ENCODE measurements at regions of chr9 and their contacts with region 1.

Region 1: DNA sequence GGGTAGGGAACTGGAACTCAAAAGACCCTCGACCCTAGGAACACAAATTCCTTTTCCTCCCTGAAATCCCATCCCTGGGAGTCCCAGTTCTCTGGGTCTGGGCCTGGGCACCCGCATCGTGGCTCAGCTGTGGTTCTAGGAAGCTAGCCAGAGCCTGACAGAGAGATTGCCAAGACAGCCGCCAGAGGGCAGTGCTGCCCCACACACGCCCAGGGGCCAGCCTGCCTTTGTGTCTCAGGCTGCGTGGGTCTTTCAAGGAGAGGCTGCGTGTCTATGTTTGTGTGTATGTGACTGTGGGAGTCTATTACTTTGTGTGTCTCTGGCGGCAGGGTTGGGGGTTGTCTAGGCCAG is 32.0 kb upstream of the TTLL11 start:
- DNase-seq: peak; percentile 46 to 80
- H3K4me3 ChIP-seq: no peak overlapping the region
- H3K27ac ChIP-seq: no peak overlapping the region
- H3K4me1 ChIP-seq: no peaks in the 10 kb centered on the region
- H3K27me3 ChIP-seq: no peaks in the 10 kb centered on the region
- CTCF ChIP-seq: peak; percentile 95

Region 2: GRCh38 chr9:121529237-121529987 is 595.7 kb before region 1 on chr9:
- CTCF ChIA-PET with region 1: interaction called, 27 read pairs
- POLR2A ChIA-PET with region 1: no interaction called
- intact Hi-C with region 1: no loop called
- DNase-seq: peak in 1 of 2 experiments; percentile 46
- H3K4me3 ChIP-seq: no peak overlapping the region
- H3K27ac ChIP-seq: no peak overlapping the region
- H3K4me1 ChIP-seq: no peaks in the 10 kb centered on the region
- H3K27me3 ChIP-seq: 0 out of 2 replicates have a peak, but pooled peaks cover 2% of the 10 kb centered on the region
- CTCF ChIP-seq: no peak

Region 3: GRCh38 chr9:121692606-121693387 is 432.3 kb before region 1 on chr9:
- CTCF ChIA-PET with region 1: no interaction called
- POLR2A ChIA-PET with region 1: no interaction called
- intact Hi-C with region 1: loop called (anchors 1 kb)
- DNase-seq: peak; percentile 83 to 91
- H3K4me3 ChIP-seq: no peak overlapping the region
- H3K27ac ChIP-seq: peak overlapping the region; percentile 48; the same call in 1 of the 2 replicates
- H3K4me1 ChIP-seq: peaks cover 14% of the 10 kb centered on the region
- H3K27me3 ChIP-seq: no peaks in the 10 kb centered on the region
- CTCF ChIP-seq: no peak

Region 4: GRCh38 chr9:122087406-122088200 is 37.5 kb before region 1 on chr9:
- CTCF ChIA-PET with region 1: no interaction called
- POLR2A ChIA-PET with region 1: no interaction called
- intact Hi-C with region 1: no loop called
- DNase-seq: peak in 1 of 2 experiments; percentile 17
- H3K4me3 ChIP-seq: no peak overlapping the region
- H3K27ac ChIP-seq: no peak overlapping the region
- H3K4me1 ChIP-seq: peaks cover 8% of the 10 kb centered on the region
- H3K27me3 ChIP-seq: no peaks in the 10 kb centered on the region
- CTCF ChIP-seq: no peak

Region 5: GRCh38 chr9:122213589-122214413 is 88.7 kb after region 1 on chr9:
- CTCF ChIA-PET with region 1: no interaction called
- POLR2A ChIA-PET with region 1: no interaction called
- intact Hi-C with region 1: no loop called
- DNase-seq: peak in 1 of 2 experiments; percentile 53
- H3K4me3 ChIP-seq: peak overlapping the region; percentile 11; the same call in 1 of the 2 replicates
- H3K27ac ChIP-seq: no peak overlapping the region
- H3K4me1 ChIP-seq: no peaks in the 10 kb centered on the region
- H3K27me3 ChIP-seq: peaks cover 15% of the 10 kb centered on the region
- CTCF ChIP-seq: no peak

Region 6: DNA sequence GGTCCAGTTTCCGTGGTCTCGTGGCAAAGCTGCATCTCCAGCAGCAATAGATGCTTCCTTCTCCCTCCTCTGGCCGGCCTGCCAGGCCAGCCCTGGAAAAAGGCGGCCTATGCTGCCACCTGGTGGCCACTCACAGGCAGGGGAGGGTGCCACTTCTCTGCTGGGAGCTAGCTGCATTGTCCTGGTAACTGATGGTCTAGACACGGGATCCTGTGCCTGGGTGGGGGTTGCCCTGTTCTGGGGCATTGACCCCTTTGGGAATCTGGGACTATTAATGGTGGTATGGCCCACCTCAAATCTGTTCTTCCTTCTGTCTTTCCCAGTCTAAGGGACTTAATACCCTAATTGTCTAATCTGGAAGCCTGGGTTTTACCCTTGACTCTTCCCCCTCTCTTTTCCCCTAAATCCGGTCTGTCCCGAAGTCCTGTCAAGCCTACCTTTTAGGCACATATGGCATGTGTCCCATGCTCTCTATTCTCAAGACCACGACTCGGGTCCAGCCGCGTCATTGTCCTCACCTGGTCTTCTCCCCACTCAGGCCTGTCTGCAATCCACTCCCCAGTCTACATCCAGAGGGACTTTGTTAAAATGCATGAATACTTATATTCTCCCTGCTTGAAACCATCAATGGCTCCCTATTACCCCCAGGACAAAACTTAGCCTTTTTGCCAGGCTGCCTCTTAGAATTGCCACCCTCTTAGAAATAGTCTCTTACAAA is 225.7 kb after region 1 on chr9:
- CTCF ChIA-PET with region 1: interaction called, 26 read pairs
- POLR2A ChIA-PET with region 1: no interaction called
- intact Hi-C with region 1: loop called (anchors 1 kb)
- DNase-seq: peak in 1 of 2 experiments; percentile 82
- H3K4me3 ChIP-seq: no peak overlapping the region
- H3K27ac ChIP-seq: no peak overlapping the region
- H3K4me1 ChIP-seq: no peaks in the 10 kb centered on the region
- H3K27me3 ChIP-seq: peaks cover 21% of the 10 kb centered on the region
- CTCF ChIP-seq: peak; percentile 93

Region 7: DNA sequence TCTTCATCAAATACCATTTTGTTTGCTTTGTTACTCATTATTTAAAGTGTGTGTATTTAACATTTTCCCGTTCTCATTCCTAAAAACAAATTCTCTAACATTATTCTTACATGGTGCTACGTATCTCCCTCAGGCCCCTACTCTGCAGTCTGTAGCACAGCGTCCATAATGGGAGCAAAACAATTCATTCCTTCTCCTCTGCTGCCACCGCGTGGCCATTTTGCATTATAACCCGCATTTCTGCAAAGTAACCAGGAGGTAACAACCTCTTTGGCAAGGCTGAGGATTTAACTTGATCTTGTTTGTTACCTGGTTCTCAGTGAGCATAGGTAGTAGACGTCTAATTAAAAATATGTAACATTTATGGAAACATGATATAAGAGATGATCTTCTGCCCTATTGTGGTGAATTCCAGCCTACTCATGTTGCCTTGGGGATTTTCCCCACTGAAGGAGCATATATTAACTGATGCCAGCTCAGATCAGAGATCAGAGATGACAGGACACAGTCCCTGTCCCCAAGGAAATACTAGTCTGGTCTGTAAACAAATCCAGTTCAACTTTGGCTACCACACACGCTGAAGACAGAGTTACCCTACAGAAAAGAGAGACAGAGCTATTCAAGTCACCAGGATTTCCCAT is 685.3 kb after region 1 on chr9:
- CTCF ChIA-PET with region 1: interaction called, 3 read pairs
- POLR2A ChIA-PET with region 1: no interaction called
- intact Hi-C with region 1: loop called (anchors 1 kb)
- DNase-seq: peak; percentile 49 to 67
- H3K4me3 ChIP-seq: no peak overlapping the region
- H3K27ac ChIP-seq: no peak overlapping the region
- H3K4me1 ChIP-seq: peaks cover 10% of the 10 kb centered on the region
- H3K27me3 ChIP-seq: no peaks in the 10 kb centered on the region
- CTCF ChIP-seq: peak; percentile 91

Measured in PC-9 (cell line).